Gastrocnemius medialis (tissue), 4 donors: ENCODE measurements at regions of chr21 and their contacts with region 1.

Region 1: GRCh38 chr21:43646550-43647260 is 12.6 kb downstream of the HSF2BP start:
- DNase-seq: peak; percentile 81 to 86
- ATAC-seq: peak; percentile 93 to 95
- H3K4me3 ChIP-seq: no peak overlapping the region
- H3K27ac ChIP-seq: peak overlapping the region in 3 of 4 donors; percentile 13 to 60 (median 39)
- H3K4me1 ChIP-seq: peaks cover 6 to 12% of the 10 kb centered on the region in 2 donors
- H3K27me3 ChIP-seq: no peaks in the 10 kb centered on the region
- CTCF ChIP-seq: peak; percentile 98 to 99 (median 99)
- POLR2A ChIP-seq: no peak

Region 2: DNA sequence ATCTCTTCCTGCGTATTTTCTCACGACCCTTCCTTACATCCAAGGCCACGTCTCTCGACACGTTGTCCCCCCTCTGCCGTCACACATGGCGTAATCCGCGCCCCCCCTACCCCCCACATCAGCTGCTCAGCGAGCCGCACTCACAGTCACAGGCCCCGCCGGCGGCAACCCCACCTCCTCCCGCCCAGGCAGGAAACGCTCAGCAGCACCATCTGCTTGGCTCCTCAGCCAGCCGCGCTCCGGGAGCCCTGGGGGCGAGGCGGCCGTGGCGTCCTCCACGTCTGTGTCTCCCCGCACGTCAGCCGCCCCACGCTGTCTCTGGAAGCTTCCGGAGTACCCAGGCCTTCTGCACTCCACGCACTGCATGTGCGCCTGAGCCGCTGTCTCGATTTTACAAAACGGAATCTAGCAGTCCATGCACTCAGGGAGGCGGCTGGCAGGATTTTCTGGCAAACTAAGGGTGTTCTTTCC is 284.3 kb before region 1 on chr21:
- in situ Hi-C with region 1: no loop called
- intact Hi-C with region 1: loop called (anchors 1 kb)
- DNase-seq: peak; percentile 53 to 67
- ATAC-seq: peak; percentile 42 to 52
- H3K4me3 ChIP-seq: peak overlapping the region; percentile 26 to 51 (median 44)
- H3K27ac ChIP-seq: peak overlapping the region; percentile 82 to 92 (median 86)
- H3K4me1 ChIP-seq: peaks cover 11 to 16% of the 10 kb centered on the region in 2 donors
- H3K27me3 ChIP-seq: peaks cover 0 to 5% (median 0%) of the 10 kb centered on the region in 3 donors
- CTCF ChIP-seq: no peak
- POLR2A ChIP-seq: peak in 1 of 2 donors; percentile 9

Region 3: GRCh38 chr21:43611598-43612369 is 34.9 kb before region 1 on chr21:
- in situ Hi-C with region 1: no loop called
- intact Hi-C with region 1: loop called (anchors 5 kb)
- DNase-seq: peak; percentile 24 to 57
- ATAC-seq: peak; percentile 86
- H3K4me3 ChIP-seq: no peak overlapping the region
- H3K27ac ChIP-seq: peak overlapping the region in 1 of 4 donors; percentile 3
- H3K4me1 ChIP-seq: no peaks in the 10 kb centered on the region
- H3K27me3 ChIP-seq: no peaks in the 10 kb centered on the region
- CTCF ChIP-seq: peak; percentile 51 to 75 (median 52)
- POLR2A ChIP-seq: no peak